Aorta (tissue), 5 donors: ENCODE measurements at regions of chr6 and their contacts with region 1.

Region 1: DNA sequence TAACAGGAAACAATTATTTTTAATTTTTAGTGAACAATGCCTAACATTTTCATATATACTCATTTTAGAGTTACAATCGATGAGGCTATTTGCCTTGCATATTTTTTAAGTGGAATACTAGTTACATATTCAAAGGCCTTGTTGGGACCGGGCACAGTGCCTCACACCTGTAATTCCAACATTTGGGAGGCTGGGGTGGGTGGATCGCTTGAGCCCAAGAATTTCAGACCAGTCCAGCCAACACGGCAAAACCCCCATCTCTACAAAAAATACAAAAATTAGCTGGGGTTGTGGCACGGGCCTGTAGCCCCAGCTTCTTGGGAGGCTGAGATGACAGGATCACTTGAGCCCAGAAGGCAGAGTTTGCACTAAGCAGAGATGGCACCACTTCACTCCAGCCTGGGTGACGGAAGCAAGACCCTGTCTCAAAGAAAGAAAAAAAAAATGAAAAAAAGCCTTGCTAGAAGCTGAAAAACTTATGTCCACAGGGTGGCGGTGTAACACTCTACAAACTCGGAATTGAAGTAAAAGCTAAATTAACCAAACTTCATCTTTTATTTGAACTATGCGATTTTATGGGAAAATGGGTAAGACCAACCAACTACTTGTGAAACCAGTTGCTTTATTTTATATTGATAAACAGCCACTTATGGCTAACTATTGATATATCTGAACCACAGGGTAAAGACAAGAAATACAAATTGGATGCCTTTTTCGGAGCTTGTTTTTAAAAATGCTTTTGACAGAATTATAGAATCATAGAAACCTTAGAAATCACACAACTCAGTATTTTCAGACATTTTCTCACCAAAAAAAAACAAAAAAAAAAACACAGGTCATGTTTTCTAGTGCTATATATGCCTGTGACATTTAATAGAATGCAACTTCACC is 24.1 kb upstream of the ROS1 start:
- DNase-seq: peak; percentile 39 to 48
- ATAC-seq: peak; percentile 71
- H3K4me3 ChIP-seq: no peak overlapping the region
- H3K27ac ChIP-seq: peak overlapping the region in 1 of 2 donors; percentile 21
- H3K4me1 ChIP-seq: peaks cover 0 to 4% of the 10 kb centered on the region in 2 donors
- H3K27me3 ChIP-seq: peaks cover 0 to 1% of the 10 kb centered on the region in 2 donors

Region 2: DNA sequence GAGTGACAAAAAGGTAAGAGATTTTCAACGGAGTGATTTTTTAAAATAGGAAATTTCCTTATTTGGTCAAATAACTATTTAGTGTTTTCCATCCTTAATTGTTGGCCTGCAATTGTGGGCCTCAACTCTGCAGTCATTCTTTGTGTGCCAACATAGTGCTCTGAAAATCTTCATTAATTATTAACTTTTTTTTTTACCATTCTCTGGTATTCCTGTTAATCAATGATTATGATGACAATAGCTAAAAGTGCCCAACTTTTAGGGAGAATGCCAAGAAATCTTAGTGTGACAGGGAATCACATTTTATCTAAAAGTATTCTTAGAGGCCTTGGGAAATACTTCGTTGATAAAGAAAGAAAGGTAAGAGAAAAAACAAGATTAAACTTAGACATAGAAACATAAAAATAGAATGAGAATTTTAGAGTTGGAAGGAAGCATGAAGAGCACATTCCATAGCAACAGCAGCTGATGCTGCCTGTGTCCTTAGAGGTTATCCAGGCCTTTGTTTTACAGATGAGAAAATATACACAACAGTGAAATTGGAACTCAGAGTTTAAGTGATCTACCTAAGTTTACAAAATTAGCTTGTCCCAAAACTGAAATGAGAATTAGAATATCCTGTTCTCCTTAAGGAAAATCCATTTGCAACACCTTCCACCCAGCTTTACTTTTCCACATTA is 622.1 kb before region 1 on chr6:
- intact Hi-C with region 1: no loop called
- DNase-seq: no peak
- ATAC-seq: no peak
- H3K4me3 ChIP-seq: no peak overlapping the region
- H3K27ac ChIP-seq: no peak overlapping the region
- H3K4me1 ChIP-seq: no peaks in the 10 kb centered on the region
- H3K27me3 ChIP-seq: no peaks in the 10 kb centered on the region

Region 3: DNA sequence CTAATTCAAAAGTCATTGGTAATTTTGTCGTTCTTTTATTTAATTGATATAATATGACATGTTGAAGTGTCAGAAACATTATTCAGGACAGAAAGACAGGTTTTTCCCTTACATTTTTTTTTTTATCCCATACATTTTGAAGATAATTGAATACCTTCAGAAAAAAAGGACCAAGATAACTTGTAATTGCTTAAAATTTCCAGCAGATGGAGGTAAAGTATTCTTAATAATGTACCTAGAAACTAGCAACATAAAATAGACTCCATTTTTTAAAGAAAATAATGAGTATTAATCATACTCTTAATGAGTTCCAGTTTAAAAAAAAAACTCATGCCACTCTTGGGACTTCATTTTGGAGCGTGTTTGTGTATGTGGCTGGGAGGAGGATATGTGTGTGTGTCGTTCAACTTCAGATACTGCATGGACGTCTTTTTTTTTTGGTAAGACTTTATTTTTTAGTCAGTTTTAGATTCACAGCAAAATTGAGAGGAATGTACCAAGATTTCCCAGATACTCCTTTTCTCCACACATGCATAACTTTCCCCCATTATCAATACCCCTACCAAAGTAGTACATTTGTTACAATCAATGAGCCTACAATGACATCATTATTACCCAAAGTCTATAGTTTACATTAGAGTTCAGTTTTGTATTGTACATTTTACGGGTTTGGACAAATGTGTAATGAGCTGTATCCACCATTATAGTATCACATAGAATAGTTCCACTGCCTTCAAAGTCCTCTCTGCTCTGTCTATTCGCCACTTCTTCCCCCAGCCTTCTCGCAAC is 103.5 kb before region 1 on chr6:
- intact Hi-C with region 1: loop called in 1 of 2 experiments (anchors 1 kb)
- DNase-seq: no peak
- ATAC-seq: peak; percentile 74
- H3K4me3 ChIP-seq: peak overlapping the region in 1 of 2 donors; percentile 54
- H3K27ac ChIP-seq: no peak overlapping the region
- H3K4me1 ChIP-seq: no peaks in the 10 kb centered on the region
- H3K27me3 ChIP-seq: no peaks in the 10 kb centered on the region

Region 4: GRCh38 chr6:117555882-117556498 is 106.2 kb after region 1 on chr6:
- intact Hi-C with region 1: loop called (anchors 2 kb)
- DNase-seq: no peak
- ATAC-seq: peak; percentile 62
- H3K4me3 ChIP-seq: no peak overlapping the region
- H3K27ac ChIP-seq: no peak overlapping the region
- H3K4me1 ChIP-seq: no peaks in the 10 kb centered on the region
- H3K27me3 ChIP-seq: no peaks in the 10 kb centered on the region

Region 5: GRCh38 chr6:117602151-117602898 is 152.5 kb after region 1 on chr6 and contains the start of gene GOPC:
- intact Hi-C with region 1: loop called (anchors 5 kb)
- DNase-seq: peak; percentile 97 to 98
- ATAC-seq: peak; percentile 100
- H3K4me3 ChIP-seq: peak within 1 kb of the TSS; percentile 63 to 89
- H3K27ac ChIP-seq: peak within 1 kb of the TSS; percentile 3 to 41
- H3K4me1 ChIP-seq: peaks cover 2 to 3% of the 10 kb centered on the region in 2 donors
- H3K27me3 ChIP-seq: no peaks in the 10 kb centered on the region
- total RNA-seq, gene GOPC: 21.2 to 28.4 TPM